ENCODE measurements at regions of chr18 and their contacts with region 1.

Region 1: DNA sequence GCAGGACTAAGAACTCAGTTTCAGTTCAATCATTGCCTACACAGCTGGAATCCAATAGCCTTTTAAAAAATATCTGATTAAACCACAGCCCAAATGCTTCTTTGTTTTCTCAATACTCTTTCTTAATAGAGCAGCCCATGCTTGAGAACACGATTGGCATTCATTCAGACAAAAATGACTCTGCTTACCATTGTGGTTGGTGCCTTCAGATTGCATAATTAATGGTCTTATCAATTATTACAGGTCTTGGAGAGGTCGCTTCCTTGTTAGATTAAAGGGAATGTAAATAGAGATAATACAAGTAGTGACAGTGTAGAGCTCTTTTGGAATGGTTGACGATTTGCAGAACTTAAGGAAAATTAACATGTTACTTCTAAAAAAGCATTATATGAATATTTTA is 107.2 kb downstream of the RNF152 start:
- DNase-seq: no peak
- H3K4me3 ChIP-seq: no peak overlapping the region
- H3K27ac ChIP-seq: no peak overlapping the region
- H3K4me1 ChIP-seq: no peaks in the 10 kb centered on the region
- H3K27me3 ChIP-seq: no peaks in the 10 kb centered on the region
- CTCF ChIP-seq: no peak

Region 2: DNA sequence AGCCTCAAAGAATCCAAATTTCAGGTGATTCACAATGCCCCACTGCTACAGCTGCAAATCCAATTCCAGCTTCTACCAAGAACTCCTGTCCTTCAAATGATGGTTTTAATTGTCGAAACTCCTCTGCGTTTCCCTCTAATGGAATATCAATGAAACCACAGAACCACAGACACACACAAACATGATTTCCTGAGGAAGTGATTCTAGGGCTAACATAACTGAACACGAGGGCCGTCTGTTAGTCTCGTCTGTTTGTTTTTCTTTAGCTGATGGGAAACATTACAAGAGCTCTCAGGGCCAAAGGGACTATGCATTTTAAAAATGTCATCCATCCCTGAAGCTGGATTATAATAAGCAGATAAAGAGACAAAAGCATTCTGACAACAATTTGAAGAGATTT is 47.8 kb after region 1 on chr18:
- intact Hi-C with region 1: loop called (anchors 10 kb)
- DNase-seq: no peak
- H3K4me3 ChIP-seq: no peak overlapping the region
- H3K27ac ChIP-seq: no peak overlapping the region
- H3K4me1 ChIP-seq: no peaks in the 10 kb centered on the region
- H3K27me3 ChIP-seq: no peaks in the 10 kb centered on the region
- CTCF ChIP-seq: no peak

Measured in colonic mucosa (tissue), 4 donors.